Activated CD4-positive, alpha-beta T cell treated with anti-CD3 and anti-CD28 coated beads, Interleukin-2, amount 10 ng/mL, durations not matched to agents 24 days and 14 days (primary cell): ENCODE measurements at regions of chr5 and their contacts with region 1.

Region 1: DNA sequence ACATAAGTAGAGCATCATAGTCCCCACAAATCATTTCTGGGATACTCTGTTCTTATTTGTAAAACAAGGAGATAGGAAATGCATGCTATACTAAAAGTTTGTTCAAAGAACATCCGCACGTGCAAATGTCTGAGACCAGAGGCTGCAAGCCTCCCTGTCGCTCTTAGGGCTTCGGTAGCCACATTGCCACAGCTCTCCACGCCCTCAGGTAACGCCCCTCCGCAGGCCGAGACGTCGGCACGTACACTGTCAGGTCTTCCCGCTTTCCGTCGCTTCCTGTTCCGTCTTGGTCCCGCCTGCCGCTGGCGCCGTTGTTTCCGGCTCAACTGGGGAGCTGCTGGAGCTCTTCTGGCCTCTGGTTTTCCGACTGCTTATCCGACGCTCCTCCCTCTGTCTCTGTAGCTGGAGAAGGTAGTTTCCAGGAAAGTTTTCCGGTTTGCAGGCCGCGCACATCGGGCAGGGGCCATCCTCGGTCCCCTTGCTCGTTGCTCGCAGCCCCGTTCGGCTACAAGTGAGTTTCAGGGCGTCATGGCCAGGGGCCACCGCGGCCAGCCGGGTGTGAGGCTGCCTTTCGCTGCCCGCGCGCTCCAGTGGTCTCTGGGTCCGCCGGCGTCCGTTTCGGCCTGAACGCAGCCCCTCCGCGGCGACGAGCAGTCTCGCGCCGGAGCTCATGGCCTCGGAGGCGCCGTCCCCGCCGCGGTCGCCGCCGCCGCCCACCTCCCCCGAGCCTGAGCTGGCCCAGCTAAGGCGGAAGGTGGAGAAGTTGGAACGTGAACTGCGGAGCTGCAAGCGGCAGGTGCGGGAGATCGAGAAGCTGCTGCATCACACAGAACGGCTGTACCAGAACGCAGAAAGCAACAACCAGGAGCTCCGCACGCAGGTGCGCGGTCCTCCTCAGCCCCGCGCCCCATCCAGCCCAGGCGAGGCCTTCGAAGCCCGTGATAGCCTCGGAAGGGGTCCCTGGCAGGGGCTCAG is at the start of gene AGGF1:
- DNase-seq: peak; percentile 97
- H3K4me3 Mint-ChIP-seq: peak within 1 kb of the TSS; percentile 99
- H3K27ac Mint-ChIP-seq: peak within 1 kb of the TSS; percentile 95
- H3K4me1 Mint-ChIP-seq: peaks cover 23% of the 10 kb centered on the region
- H3K27me3 Mint-ChIP-seq: peaks cover 8% of the 10 kb centered on the region
- total RNA-seq, gene AGGF1: 29.1 and 32.9 TPM in 2 replicates

Region 2: GRCh38 chr5:76908166-76908565 is 122.2 kb before region 1 on chr5:
- intact Hi-C with region 1: no loop called
- DNase-seq: no peak
- H3K4me3 Mint-ChIP-seq: no peak overlapping the region
- H3K27ac Mint-ChIP-seq: no peak overlapping the region
- H3K4me1 Mint-ChIP-seq: no peaks in the 10 kb centered on the region
- H3K27me3 Mint-ChIP-seq: no peaks in the 10 kb centered on the region

Region 3: DNA sequence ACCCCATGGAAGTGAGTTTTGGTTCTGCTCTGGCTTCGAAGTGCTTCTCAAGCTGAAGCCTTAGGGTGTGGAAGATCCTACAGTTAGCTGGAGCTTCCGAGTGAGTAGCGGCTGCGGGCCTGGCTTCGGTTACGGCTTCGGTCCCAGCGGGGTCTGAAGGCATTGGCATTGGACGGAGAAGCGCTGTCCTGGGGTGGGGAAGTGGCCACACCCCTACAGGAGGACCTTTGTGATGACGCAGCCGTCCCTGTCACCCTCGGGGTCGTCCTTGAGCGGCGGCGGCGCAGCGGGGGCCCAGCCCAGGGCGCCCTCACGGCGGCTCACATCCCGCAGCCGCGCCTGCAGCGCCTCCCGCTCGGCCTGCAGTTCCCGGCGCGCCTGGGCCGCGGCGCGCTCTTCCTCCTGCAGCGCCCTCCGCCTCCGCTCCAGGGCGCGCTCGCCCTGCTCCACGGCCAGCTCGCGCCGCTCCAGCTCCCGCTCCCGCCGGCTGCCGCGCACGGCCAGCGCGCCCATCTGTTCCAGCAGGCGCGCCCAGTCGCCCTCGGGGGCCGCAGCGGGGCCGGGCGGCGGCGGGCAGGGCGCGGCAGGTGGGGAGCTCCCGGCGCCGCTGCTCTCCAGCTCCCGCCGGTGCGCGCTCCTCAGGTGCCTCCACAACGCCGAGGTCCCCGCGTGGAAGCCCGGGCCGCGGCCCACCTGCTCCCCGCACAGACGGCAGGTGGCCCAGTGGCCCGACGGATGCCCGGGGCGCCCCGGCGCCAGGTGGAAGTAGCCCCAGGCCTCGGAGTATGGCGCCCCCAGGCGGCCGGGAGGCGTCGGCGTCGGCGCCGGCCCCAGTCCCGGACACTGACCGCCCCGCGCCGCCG is 46.8 kb after region 1 on chr5:
- intact Hi-C with region 1: loop called (anchors 1 kb)
- DNase-seq: peak; percentile 89
- H3K4me3 Mint-ChIP-seq: peak overlapping the region; percentile 66
- H3K27ac Mint-ChIP-seq: no peak overlapping the region
- H3K4me1 Mint-ChIP-seq: peaks cover 4% of the 10 kb centered on the region
- H3K27me3 Mint-ChIP-seq: no peaks in the 10 kb centered on the region

Region 4: DNA sequence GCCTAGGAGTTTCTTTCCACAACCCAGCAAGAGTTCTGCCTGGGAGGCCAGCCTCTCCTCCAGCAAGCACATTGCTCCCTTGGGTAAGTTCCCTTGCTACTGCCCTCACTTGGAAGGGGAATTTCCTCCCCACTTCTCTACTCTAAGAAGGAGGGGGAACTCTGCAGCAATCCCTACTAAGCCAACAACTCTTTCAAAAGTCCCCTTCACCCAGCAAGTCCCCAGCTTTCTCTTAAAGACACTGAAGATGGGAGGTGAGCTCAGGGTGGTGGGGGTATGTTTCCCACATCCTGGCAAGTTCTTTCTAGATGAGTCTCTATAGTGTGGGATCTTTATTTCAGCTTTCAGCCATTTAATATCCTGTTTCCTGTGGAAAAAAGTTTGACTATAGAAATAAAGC is 229.1 kb after region 1 on chr5:
- intact Hi-C with region 1: no loop called
- DNase-seq: no peak
- H3K4me3 Mint-ChIP-seq: no peak overlapping the region
- H3K27ac Mint-ChIP-seq: peak overlapping the region; percentile 64
- H3K4me1 Mint-ChIP-seq: peaks cover 8% of the 10 kb centered on the region
- H3K27me3 Mint-ChIP-seq: peaks cover 13% of the 10 kb centered on the region